ENCODE measurements at regions of chr20 and their contacts with region 1.

Region 1: GRCh38 chr20:25247956-25248785 is at the start of gene PYGB:
- DNase-seq: peak; percentile 78
- H3K4me3 Mint-ChIP-seq: peak within 1 kb of the TSS; percentile 93
- H3K27ac Mint-ChIP-seq: peak within 1 kb of the TSS; percentile 77
- H3K4me1 Mint-ChIP-seq: peaks cover 33% of the 10 kb centered on the region
- H3K27me3 Mint-ChIP-seq: no peaks in the 10 kb centered on the region
- CTCF ChIP-seq: no peak
- total RNA-seq, gene PYGB: 375 and 435 TPM in 2 replicates

Region 2: DNA sequence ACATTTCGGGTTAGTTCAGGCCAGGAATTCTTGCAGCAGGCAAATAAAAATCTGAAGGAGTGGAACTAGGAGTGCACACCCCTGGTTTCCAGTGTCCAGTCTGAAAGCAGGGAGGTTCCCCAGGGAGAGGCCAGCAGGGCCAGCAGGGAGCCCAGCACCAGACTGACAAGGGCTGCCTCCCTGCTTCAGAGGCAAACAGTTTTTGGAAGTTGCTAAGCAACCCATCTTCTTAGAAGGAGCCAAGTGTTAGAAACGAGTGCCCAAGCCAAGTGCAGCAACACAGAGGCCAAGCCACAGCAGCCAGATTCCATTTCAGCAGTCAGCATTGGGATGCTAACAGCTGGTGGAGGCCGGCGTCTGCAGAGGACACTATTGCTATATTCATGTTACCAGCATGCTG is 599.7 kb before region 1 on chr20:
- CTCF ChIA-PET with region 1: no interaction called
- POLR2A ChIA-PET with region 1: no interaction called
- intact Hi-C with region 1: no loop called
- DNase-seq: no peak
- H3K4me3 Mint-ChIP-seq: no peak overlapping the region
- H3K27ac Mint-ChIP-seq: no peak overlapping the region
- H3K4me1 Mint-ChIP-seq: no peaks in the 10 kb centered on the region
- H3K27me3 Mint-ChIP-seq: no peaks in the 10 kb centered on the region
- CTCF ChIP-seq: no peak

Region 3: GRCh38 chr20:24808616-24809015 is 439.6 kb before region 1 on chr20:
- CTCF ChIA-PET with region 1: no interaction called
- POLR2A ChIA-PET with region 1: no interaction called
- intact Hi-C with region 1: no loop called
- DNase-seq: no peak
- H3K4me3 Mint-ChIP-seq: no peak overlapping the region
- H3K27ac Mint-ChIP-seq: no peak overlapping the region
- H3K4me1 Mint-ChIP-seq: no peaks in the 10 kb centered on the region
- H3K27me3 Mint-ChIP-seq: no peaks in the 10 kb centered on the region
- CTCF ChIP-seq: no peak

Region 4: DNA sequence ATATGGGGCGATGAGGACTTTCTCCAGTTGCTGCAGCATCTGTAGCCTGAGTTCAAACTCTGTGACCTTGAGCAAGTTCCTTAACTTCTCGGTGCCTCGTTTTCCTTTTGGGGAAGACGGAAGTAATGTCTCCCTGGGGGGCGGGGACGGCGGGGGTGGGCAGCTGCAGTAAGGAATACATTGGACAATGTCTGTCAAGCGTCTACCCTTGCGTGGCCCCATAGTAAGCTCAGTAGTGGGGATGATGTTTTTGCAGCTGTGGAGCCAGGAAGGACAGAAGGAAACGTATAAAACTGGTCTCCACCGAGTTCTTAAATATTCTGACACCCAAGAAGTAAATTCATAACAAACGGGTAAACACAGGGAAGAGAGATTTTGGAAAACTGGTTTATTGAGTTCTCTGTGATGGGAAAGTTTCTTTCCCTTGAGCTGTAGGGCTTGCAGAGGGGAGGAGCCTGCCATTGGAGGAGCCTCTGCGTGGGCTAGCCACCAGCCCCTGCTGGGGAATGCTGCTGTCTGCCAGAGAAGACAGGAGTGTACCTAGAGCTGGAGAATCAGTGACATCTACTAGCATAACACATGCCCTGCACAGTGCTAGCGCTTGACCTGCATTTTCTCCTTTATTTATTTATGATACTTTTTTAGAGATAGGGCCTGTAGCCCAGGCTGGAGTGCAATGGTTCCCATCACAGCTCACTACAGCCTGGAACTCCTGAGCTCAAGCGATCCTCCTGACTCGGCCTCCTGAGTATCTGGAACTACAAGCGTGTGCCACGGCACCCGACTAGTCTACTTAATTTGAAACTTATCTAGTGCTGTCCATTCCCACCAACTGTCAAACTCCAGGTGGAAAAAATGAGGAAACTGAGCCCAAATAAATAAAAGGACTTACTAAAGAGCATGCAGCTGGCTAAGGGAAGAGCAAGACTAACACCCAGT is 189.0 kb before region 1 on chr20:
- CTCF ChIA-PET with region 1: interaction called, 4 read pairs
- POLR2A ChIA-PET with region 1: interaction called, 10 read pairs
- intact Hi-C with region 1: loop called (anchors 10 kb)
- DNase-seq: no peak
- H3K4me3 Mint-ChIP-seq: no peak overlapping the region
- H3K27ac Mint-ChIP-seq: no peak overlapping the region
- H3K4me1 Mint-ChIP-seq: peaks cover 14% of the 10 kb centered on the region
- H3K27me3 Mint-ChIP-seq: peaks cover 43% of the 10 kb centered on the region
- CTCF ChIP-seq: no peak

Region 5: DNA sequence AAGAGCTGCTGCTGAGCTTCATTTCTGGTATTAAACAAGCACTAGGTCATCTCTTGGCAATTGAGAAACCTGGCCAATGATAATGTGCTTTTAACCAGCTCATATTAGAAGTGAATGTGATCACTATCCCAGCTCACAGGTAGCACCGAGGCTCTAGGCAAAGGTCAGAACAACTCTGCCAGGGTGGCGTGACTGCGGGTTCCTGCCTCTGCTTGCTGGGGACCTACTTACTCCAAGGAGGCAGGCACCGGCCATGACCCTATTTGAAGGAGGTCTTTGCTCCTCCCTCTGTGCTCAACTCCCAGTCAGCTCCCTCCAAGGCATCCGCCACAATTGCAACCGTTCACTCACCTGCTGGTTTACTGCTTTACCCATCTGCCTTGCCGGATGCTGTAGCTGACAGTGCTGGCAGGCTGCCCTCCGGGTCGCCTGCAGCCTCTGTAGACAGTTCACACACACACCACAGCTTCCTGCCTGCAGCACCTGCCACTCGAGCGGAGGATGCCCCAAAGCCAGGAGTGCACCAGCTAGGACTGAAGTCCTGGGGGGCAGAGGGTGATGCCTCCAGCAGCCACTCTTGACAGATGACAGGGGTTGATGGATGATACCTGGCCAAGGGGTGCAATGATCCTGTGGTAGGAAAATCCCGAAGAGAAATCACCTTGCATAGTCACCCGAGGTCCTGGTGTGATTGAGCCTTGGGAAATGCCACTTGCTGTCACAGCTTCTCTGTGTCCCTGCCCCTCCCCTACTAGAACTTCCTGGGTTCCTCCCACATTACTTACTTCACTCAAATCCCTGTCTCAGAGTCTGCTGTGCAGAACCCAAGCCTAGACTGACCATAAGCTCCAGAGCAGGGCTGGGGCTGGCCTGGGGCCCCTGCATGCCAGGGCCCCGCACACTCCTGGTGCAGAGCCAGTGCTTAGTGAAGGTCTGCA is 157.4 kb before region 1 on chr20:
- CTCF ChIA-PET with region 1: no interaction called
- POLR2A ChIA-PET with region 1: no interaction called
- intact Hi-C with region 1: no loop called
- DNase-seq: no peak
- H3K4me3 Mint-ChIP-seq: no peak overlapping the region
- H3K27ac Mint-ChIP-seq: no peak overlapping the region
- H3K4me1 Mint-ChIP-seq: no peaks in the 10 kb centered on the region
- H3K27me3 Mint-ChIP-seq: peaks cover 15% of the 10 kb centered on the region
- CTCF ChIP-seq: no peak

Region 6: DNA sequence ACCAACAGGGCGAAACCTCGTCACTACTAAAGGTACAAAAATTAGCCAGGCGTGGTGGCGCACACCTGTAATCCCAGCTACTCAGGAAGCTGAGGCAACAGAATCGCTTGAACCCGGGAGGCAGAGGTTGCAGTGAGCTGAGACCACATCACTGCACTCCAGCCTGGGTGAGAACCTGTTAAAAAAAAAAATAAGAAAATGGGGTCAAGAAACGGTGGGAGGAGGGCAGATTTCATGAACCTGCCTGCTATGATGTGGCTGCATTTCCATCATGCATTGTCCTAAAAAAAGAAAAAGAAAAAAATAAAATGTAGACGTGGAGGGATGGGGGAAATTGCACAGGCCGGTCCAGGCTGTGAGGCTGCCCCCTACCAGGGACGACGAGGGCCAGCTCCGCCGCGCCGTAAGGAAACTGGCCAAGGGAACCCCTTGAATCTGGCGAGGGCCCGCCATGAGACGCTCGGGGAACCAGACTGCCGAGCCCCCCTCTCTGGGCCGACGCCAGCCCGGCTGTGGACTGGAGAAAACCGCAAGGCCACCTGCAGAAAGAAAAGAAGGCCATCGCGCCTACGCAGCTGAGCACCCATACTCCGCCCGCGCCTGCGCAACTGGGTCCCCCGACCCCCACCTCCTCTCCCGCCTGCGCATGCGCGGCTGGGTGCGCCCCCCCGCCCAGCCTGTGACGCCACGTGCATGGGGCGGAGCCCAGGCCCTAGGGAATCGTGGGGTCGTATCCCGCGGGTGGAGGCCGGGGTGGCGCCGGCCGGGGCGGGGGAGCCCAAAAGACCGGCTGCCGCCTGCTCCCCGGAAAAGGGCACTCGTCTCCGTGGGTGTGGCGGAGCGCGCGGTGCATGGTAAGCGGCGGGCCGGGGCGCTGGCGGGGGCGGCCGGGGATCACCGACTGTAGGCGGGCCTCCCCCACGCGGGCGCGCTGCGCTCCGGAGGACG is 52.9 kb before region 1 on chr20 and contains the start of gene ENTPD6:
- CTCF ChIA-PET with region 1: interaction called, 9 read pairs
- POLR2A ChIA-PET with region 1: interaction called, 105 read pairs
- intact Hi-C with region 1: loop called (anchors 2 kb)
- DNase-seq: peak; percentile 86
- H3K4me3 Mint-ChIP-seq: peak within 1 kb of the TSS; percentile 77
- H3K27ac Mint-ChIP-seq: peak within 1 kb of the TSS; percentile 5
- H3K4me1 Mint-ChIP-seq: peaks cover 28% of the 10 kb centered on the region
- H3K27me3 Mint-ChIP-seq: no peaks in the 10 kb centered on the region
- CTCF ChIP-seq: no peak
- total RNA-seq, gene ENTPD6: 98.0 and 99.5 TPM in 2 replicates

Region 7: GRCh38 chr20:25237610-25238318 is 10.4 kb before region 1 on chr20:
- CTCF ChIA-PET with region 1: interaction called, 37 read pairs
- POLR2A ChIA-PET with region 1: interaction called, 517 read pairs
- intact Hi-C with region 1: loop called (anchors 1 kb)
- DNase-seq: peak; percentile 100
- H3K4me3 Mint-ChIP-seq: peak overlapping the region; percentile 49
- H3K27ac Mint-ChIP-seq: peak overlapping the region; percentile 93
- H3K4me1 Mint-ChIP-seq: peaks cover 62% of the 10 kb centered on the region
- H3K27me3 Mint-ChIP-seq: no peaks in the 10 kb centered on the region
- CTCF ChIP-seq: no peak

Region 8: GRCh38 chr20:25299806-25300205 is 51.6 kb after region 1 on chr20:
- CTCF ChIA-PET with region 1: interaction called, 27 read pairs
- POLR2A ChIA-PET with region 1: interaction called, 93 read pairs
- intact Hi-C with region 1: no loop called
- DNase-seq: peak; percentile 30
- H3K4me3 Mint-ChIP-seq: no peak overlapping the region
- H3K27ac Mint-ChIP-seq: peak overlapping the region; percentile 64
- H3K4me1 Mint-ChIP-seq: peaks cover 8% of the 10 kb centered on the region
- H3K27me3 Mint-ChIP-seq: no peaks in the 10 kb centered on the region
- CTCF ChIP-seq: no peak

Region 9: GRCh38 chr20:25407311-25408169 is 159.4 kb after region 1 on chr20 and contains the start of gene GINS1:
- CTCF ChIA-PET with region 1: no interaction called
- POLR2A ChIA-PET with region 1: interaction called, 18 read pairs
- intact Hi-C with region 1: no loop called
- DNase-seq: peak; percentile 90
- H3K4me3 Mint-ChIP-seq: peak within 1 kb of the TSS; percentile 92
- H3K27ac Mint-ChIP-seq: peak within 1 kb of the TSS; percentile 69
- H3K4me1 Mint-ChIP-seq: peaks cover 15% of the 10 kb centered on the region
- H3K27me3 Mint-ChIP-seq: no peaks in the 10 kb centered on the region
- CTCF ChIP-seq: no peak
- total RNA-seq, gene GINS1: 5.2 and 6.0 TPM in 2 replicates